B cell (primary cell): ENCODE measurements at regions of chr14 and their contacts with region 1.

Region 1: DNA sequence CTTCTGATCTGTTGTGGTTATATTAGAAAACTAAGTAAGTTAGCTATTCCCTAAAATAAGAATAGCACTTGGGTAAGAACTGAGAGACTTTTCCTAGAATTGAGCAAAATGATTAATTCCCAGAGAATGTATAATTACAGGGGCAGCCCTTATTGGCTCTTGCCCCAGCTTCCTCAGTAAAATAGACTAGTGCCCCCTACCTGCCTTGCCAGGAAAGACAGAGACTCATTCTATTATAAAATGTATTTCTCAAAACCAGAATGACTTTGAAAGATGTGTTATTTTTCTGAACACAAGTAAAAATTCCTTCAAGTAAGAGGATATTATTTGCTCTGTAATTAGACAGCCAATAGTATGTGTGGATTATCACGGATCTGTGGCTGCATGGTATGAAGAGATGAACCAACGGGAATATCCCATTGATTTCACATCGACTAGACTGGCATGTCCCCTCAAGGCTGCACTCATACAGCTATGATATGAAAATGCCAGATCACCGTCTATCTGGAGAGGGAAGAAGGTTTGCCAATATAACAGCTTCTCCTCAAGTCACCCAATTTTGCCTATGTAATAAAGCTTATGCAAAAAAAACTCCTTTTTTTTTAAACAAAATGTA is 7.4 kb upstream of the GLRX5 start:
- DNase-seq: peak; percentile 68
- ATAC-seq: peak; percentile 81
- H3K4me3 ChIP-seq: no peak overlapping the region
- H3K4me3 Mint-ChIP-seq: no peak overlapping the region
- H3K27ac ChIP-seq: no peak overlapping the region
- H3K27ac Mint-ChIP-seq: no peak overlapping the region
- H3K4me1 ChIP-seq: peaks cover 14 to 23% of the 10 kb centered on the region in 2 donors
- H3K4me1 Mint-ChIP-seq: peaks cover 38% of the 10 kb centered on the region
- H3K27me3 ChIP-seq: no peaks in the 10 kb centered on the region
- H3K27me3 Mint-ChIP-seq: no peaks in the 10 kb centered on the region
- CTCF ChIP-seq: peak; percentile 93

Region 2: GRCh38 chr14:95442633-95443021 is 84.9 kb before region 1 on chr14:
- CTCF ChIA-PET with region 1: interaction called, 204 read pairs
- POLR2A ChIA-PET with region 1: interaction called, 3 read pairs
- intact Hi-C with region 1: loop called (anchors 1 kb)
- DNase-seq: peak; percentile 83
- ATAC-seq: peak; percentile 91
- H3K4me3 ChIP-seq: no peak overlapping the region
- H3K4me3 Mint-ChIP-seq: peak overlapping the region; percentile 0
- H3K27ac ChIP-seq: peak overlapping the region in 1 of 2 donors; percentile 55
- H3K27ac Mint-ChIP-seq: peak overlapping the region; percentile 73
- H3K4me1 ChIP-seq: peaks cover 28 to 37% of the 10 kb centered on the region in 2 donors
- H3K4me1 Mint-ChIP-seq: peaks cover 27% of the 10 kb centered on the region
- H3K27me3 ChIP-seq: no peaks in the 10 kb centered on the region
- H3K27me3 Mint-ChIP-seq: no peaks in the 10 kb centered on the region
- CTCF ChIP-seq: peak; percentile 88

Region 3: DNA sequence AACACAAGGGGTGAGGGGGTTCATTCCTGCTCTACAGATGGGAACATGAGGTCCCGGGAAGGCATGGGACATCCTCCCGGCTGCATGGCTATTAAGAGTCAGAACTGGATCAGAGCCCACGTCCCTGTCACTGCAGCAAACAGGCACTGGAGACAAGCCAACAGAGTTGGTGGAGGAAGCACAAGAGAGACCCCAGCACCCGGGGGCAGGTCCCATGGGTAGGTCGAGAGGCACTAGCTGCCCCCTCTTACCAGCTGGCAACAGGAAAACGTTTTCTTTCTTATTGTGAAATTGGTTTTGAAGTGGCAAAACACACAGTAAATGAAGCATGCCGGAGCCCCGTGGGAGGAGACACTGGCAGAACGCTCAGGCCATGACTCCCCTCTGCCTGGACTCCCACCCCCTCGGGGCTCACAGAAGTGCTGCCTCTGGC is 54.7 kb before region 1 on chr14:
- CTCF ChIA-PET with region 1: interaction called, 11 read pairs
- POLR2A ChIA-PET with region 1: no interaction called
- intact Hi-C with region 1: no loop called
- DNase-seq: no peak
- ATAC-seq: peak; percentile 31
- H3K4me3 ChIP-seq: no peak overlapping the region
- H3K4me3 Mint-ChIP-seq: peak overlapping the region; percentile 10
- H3K27ac ChIP-seq: peak overlapping the region in 1 of 2 donors; percentile 39
- H3K27ac Mint-ChIP-seq: peak overlapping the region; percentile 77
- H3K4me1 ChIP-seq: peaks cover 16 to 24% of the 10 kb centered on the region in 2 donors
- H3K4me1 Mint-ChIP-seq: peaks cover 28% of the 10 kb centered on the region
- H3K27me3 ChIP-seq: no peaks in the 10 kb centered on the region
- H3K27me3 Mint-ChIP-seq: no peaks in the 10 kb centered on the region
- CTCF ChIP-seq: no peak

Region 4: GRCh38 chr14:95488376-95489213 is 38.9 kb before region 1 on chr14:
- CTCF ChIA-PET with region 1: interaction called, 15 read pairs
- POLR2A ChIA-PET with region 1: no interaction called
- intact Hi-C with region 1: no loop called
- DNase-seq: no peak
- ATAC-seq: no peak
- H3K4me3 ChIP-seq: no peak overlapping the region
- H3K4me3 Mint-ChIP-seq: peak overlapping the region; percentile 26
- H3K27ac ChIP-seq: peak overlapping the region in 1 of 2 donors; percentile 9
- H3K27ac Mint-ChIP-seq: peak overlapping the region; percentile 86
- H3K4me1 ChIP-seq: peaks cover 70 to 79% of the 10 kb centered on the region in 2 donors
- H3K4me1 Mint-ChIP-seq: peaks cover 86% of the 10 kb centered on the region
- H3K27me3 ChIP-seq: no peaks in the 10 kb centered on the region
- H3K27me3 Mint-ChIP-seq: no peaks in the 10 kb centered on the region
- CTCF ChIP-seq: no peak

Region 5: GRCh38 chr14:95504135-95505029 is 23.1 kb before region 1 on chr14:
- CTCF ChIA-PET with region 1: interaction called, 13 read pairs
- POLR2A ChIA-PET with region 1: no interaction called
- intact Hi-C with region 1: no loop called
- DNase-seq: no peak
- ATAC-seq: no peak
- H3K4me3 ChIP-seq: no peak overlapping the region
- H3K4me3 Mint-ChIP-seq: peak overlapping the region; percentile 34
- H3K27ac ChIP-seq: peak overlapping the region in 1 of 2 donors; percentile 52
- H3K27ac Mint-ChIP-seq: peak overlapping the region; percentile 67
- H3K4me1 ChIP-seq: peaks cover 61 to 94% of the 10 kb centered on the region in 2 donors
- H3K4me1 Mint-ChIP-seq: peaks cover 90% of the 10 kb centered on the region
- H3K27me3 ChIP-seq: no peaks in the 10 kb centered on the region
- H3K27me3 Mint-ChIP-seq: no peaks in the 10 kb centered on the region
- CTCF ChIP-seq: no peak

Region 6: DNA sequence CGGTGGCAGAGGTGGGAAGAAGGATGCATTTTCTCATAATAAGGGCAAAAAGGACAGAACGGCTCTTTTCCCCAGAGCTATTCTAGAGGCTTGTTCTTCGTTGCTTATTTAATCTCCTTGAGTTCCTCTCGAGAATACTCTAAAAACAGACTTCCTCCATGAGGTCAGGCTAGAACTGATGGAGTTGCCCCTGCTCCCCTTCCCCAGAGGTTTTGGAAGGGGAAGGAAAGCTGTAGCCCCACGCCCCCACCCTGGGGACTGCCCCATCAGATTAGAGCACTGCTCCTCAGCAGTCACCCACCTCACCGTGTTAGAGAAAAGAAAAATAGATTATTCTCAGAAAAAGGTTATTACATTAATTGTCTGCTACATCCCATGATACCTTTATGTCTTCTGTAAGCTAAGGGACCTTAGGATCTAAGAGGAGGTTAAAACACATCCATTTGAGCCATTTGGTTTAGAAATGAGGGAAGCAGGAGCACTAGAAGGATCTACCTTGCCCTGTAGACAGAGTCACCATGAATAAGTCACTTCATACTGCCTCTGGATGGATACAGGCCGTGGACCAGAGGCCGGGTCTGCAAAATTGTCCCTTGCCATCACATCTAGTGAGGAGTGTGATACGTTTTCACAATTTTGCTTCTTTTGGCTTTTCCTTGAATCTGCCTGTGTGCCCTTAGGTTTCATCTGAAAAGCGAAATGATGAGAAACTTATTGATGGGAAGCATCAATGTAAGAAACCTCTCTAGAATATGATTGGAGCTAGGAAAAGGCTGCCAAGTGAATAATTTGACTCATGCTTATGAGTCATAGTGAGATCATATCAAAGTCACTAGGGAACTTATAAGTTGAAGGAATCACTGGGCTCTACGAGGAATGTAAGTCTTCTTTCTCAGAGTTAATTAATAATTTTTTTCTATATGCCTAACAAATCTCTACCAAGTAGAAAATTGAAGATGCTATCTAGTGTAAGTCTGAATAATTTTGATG is 18.0 kb after region 1 on chr14:
- CTCF ChIA-PET with region 1: interaction called, 11 read pairs
- POLR2A ChIA-PET with region 1: no interaction called
- intact Hi-C with region 1: no loop called
- DNase-seq: no peak
- ATAC-seq: no peak
- H3K4me3 ChIP-seq: no peak overlapping the region
- H3K4me3 Mint-ChIP-seq: no peak overlapping the region
- H3K27ac ChIP-seq: no peak overlapping the region
- H3K27ac Mint-ChIP-seq: no peak overlapping the region
- H3K4me1 ChIP-seq: no peaks in the 10 kb centered on the region
- H3K4me1 Mint-ChIP-seq: peaks cover 2% of the 10 kb centered on the region
- H3K27me3 ChIP-seq: no peaks in the 10 kb centered on the region
- H3K27me3 Mint-ChIP-seq: no peaks in the 10 kb centered on the region
- CTCF ChIP-seq: no peak

Region 7: GRCh38 chr14:95614349-95614748 is 86.9 kb after region 1 on chr14:
- CTCF ChIA-PET with region 1: no interaction called
- POLR2A ChIA-PET with region 1: no interaction called
- intact Hi-C with region 1: no loop called
- DNase-seq: peak; percentile 36
- ATAC-seq: peak; percentile 33
- H3K4me3 ChIP-seq: no peak overlapping the region
- H3K4me3 Mint-ChIP-seq: no peak overlapping the region
- H3K27ac ChIP-seq: no peak overlapping the region
- H3K27ac Mint-ChIP-seq: peak overlapping the region; percentile 23
- H3K4me1 ChIP-seq: peaks cover 13 to 28% of the 10 kb centered on the region in 2 donors
- H3K4me1 Mint-ChIP-seq: peaks cover 32% of the 10 kb centered on the region
- H3K27me3 ChIP-seq: no peaks in the 10 kb centered on the region
- H3K27me3 Mint-ChIP-seq: peaks cover 26% of the 10 kb centered on the region
- CTCF ChIP-seq: no peak